Right ventricle myocardium inferior (tissue), 1 donor: ENCODE measurements at regions of chr12 and their contacts with region 1.

Region 1: DNA sequence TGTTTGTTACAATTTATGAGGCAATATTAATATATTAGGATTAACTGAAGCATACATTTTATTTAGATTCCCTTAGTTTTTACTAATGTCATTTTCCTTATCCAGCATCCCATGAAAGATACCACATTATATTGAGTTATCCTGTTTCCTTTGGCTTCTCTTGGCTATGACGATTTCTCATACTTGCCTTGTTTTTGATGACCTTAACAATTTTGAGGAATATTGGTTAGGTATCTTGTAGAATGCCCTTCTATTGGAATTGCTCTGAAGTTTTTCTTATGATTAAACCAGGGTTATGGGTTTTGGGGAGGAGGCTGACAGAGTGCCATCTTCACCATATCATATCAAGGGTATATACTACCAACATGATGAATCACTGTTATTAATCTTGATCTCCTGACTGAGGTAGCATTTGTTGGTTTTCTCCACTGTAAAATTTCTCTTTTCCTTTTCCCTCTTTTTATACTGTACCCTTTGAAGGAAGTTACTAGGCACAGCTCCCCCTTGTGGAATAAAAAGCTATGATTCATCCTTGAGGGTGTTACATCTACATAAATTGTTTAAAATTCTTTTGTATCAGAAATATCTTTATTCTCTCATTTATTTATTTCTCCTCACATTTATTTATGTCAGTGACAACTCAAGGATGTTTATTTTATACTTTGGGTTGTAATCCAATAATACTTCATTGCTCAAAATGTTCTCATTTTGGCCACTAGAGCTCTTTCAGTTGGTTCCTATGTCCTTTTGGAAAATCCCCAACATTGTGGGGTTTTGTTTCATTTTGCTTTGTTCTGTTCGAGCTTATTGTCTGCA is 239.0 kb downstream of the SLC16A7 start:
- DNase-seq: no peak
- ATAC-seq: no peak

Region 2: DNA sequence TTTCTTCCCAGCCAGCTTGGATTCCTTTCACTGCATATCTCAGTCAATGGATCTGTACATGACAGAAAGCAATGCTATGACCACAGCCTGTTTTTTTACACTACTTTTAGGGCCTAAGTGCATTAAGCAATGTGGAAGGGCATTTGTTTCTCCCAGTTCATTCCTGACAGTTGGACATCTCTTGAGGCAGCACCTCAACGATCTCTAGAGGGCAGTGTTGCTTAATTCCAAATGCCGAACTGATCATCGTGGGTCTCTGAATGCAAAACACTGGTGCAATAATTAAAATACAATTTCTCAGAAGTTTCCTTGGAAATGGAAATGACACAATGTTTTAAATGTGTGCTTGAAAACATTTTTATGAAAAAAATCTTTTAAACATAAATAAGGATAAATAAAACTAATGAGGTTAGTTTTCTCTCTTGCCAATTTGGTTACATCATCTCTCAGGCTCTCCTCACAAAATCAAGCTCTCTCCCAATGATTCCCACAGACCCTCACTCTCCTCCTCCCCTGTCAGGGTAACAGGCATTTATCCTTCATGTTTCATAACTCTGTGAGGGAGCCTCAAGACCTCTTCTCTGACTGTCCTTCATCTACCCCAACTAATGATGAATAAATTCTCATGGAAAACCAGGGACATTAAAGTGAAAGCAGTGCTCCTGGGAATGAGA is 431.5 kb before region 1 on chr12:
- intact Hi-C with region 1: loop called (anchors 2 kb)
- DNase-seq: no peak
- ATAC-seq: peak; percentile 67

Region 3: DNA sequence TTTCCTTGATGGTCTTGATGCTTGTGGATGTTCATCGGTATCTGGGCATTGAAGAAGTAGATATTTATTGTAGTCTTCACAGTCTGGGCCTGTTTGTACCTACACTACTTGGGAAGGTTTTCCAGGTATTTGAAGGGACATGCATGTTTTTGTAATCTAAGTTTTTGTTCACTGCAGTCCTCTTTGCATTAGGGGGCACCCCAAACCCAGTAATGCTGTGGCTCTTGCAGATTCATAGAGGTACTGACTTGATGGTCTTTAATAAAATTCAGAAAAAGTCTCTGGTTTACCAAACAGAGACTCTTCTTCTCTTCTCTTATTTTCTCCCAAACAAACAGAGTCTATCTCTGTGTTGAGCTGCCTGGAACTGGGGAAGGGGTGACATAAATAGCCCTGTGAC is 389.9 kb before region 1 on chr12:
- intact Hi-C with region 1: loop called (anchors 2 kb)
- DNase-seq: no peak
- ATAC-seq: no peak

Region 4: DNA sequence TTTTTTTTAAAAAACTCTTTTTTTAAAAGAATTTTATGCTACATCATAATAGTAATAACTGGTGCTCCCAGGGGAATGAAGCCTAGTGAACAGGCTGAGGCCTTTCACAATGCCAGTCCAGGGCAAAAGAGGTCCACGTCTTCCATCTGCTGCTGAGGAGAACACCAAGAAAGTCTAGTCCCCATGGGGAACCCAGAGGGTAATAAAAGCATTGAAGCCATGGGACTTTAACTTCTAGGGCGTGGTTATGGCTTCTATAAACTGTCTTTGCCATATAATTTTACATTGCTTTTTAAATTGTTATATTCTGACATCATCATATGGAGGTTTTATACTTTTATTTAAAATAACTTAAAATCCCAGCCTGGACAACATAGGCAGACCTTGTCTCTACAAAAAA is 174.7 kb before region 1 on chr12:
- intact Hi-C with region 1: no loop called
- DNase-seq: no peak
- ATAC-seq: no peak